ENCODE measurements at regions of chr7 and their contacts with region 1.

Region 1: DNA sequence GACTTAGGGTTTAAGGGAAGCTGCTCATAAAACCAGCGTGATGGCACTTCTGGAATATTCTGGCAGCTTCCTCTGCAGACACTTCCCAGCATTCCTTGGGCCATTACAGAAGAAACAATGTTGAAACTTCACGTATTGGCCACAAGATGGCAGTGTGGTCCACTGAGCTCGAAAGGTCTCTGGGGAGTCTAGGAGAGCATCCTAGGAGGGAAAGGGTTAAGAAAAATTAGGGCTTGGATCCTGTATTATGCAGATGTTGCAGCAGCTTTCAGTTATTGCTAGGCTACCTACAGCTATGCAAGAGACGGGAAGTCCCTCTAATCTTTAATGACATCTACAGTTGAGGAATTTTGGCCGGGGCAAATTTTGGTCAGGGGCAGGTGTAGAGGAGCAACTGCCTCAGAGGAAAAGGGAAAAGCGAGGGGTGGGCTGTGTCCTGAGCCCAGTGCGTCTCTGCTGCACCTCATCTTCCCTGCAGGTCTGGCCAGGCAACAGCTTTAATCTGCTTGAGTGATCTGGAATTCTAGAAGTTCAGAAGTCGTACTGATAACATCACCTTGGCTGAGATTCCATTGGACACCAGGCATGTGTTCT is 220.7 kb upstream of the PRSS58 start:
- DNase-seq: peak; percentile 52
- H3K4me3 ChIP-seq: no peak overlapping the region
- H3K27ac ChIP-seq: no peak overlapping the region
- H3K4me1 ChIP-seq: peaks cover 7 to 13% of the 10 kb centered on the region in 2 experiments; a peak in 2 of 4 replicates
- H3K27me3 ChIP-seq: no peaks in the 10 kb centered on the region
- CTCF ChIP-seq: peak; percentile 89
- EP300 ChIP-seq: peak in 1 of 2 experiments; percentile 56; a peak in 2 of 4 replicates
- RAD21 ChIP-seq: peak; percentile 71

Region 2: GRCh38 chr7:142134909-142135308 is 343.7 kb before region 1 on chr7:
- CTCF ChIA-PET with region 1: no interaction called
- POLR2A ChIA-PET with region 1: no interaction called
- DNase-seq: no peak
- H3K4me3 ChIP-seq: no peak overlapping the region
- H3K27ac ChIP-seq: no peak overlapping the region
- H3K4me1 ChIP-seq: no peaks in the 10 kb centered on the region
- H3K27me3 ChIP-seq: no peaks in the 10 kb centered on the region; the same call in 1 of the 2 replicates
- CTCF ChIP-seq: no peak
- EP300 ChIP-seq: no peak
- RAD21 ChIP-seq: no peak

Region 3: DNA sequence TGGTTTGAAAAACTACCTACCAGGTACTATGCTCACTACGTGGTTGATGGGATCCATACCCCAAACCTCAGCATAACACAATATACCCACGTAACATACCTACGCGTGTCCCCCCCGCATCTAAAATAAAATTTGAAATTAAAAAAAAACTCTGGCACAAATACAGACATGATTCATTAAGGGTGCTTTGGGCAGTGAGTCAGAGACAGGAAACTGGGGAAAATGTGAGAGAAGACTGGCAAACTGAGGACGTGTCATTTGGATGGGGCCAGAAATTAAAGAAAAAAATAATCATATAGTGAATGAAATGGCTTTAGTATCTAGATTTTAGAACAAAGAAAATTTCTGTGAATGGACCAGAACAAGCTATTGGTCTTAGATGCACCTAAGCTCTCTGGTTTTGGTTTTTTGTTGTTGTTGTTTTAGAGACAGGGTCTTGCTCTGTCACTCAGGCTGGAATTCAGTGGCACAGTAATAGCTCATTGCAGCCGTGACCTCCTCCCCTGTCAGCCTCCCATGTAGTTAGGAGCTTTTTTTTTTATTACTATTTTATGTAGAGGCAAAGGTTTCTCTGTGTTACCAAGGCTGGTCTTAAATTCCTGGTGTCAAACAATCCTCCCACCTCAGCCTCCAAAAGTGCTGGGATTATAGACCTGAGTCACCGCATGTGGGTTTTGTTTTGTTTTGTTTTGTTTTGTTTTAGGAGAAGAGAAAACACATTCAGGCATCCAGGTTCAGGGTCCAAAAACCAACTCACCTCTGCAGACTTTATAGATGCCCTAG is 214.8 kb before region 1 on chr7:
- CTCF ChIA-PET with region 1: no interaction called
- POLR2A ChIA-PET with region 1: no interaction called
- DNase-seq: no peak
- H3K4me3 ChIP-seq: no peak overlapping the region
- H3K27ac ChIP-seq: peak overlapping the region in 1 of 2 experiments; percentile 24; a peak in 1 of 4 replicates
- H3K4me1 ChIP-seq: peaks cover 0 to 3% of the 10 kb centered on the region in 2 experiments; a peak in 1 of 4 replicates
- H3K27me3 ChIP-seq: no peaks in the 10 kb centered on the region; the same call in 1 of the 2 replicates
- CTCF ChIP-seq: no peak
- EP300 ChIP-seq: no peak
- RAD21 ChIP-seq: no peak

Region 4: GRCh38 chr7:142357953-142358520 is 120.5 kb before region 1 on chr7:
- CTCF ChIA-PET with region 1: interaction called, 14 read pairs
- POLR2A ChIA-PET with region 1: no interaction called
- DNase-seq: peak; percentile 66
- H3K4me3 ChIP-seq: no peak overlapping the region
- H3K27ac ChIP-seq: no peak overlapping the region
- H3K4me1 ChIP-seq: no peaks in the 10 kb centered on the region; a peak in 1 of 4 replicates
- H3K27me3 ChIP-seq: peaks cover 17% of the 10 kb centered on the region; the same call in 1 of the 2 replicates
- CTCF ChIP-seq: peak; percentile 93
- EP300 ChIP-seq: no peak
- RAD21 ChIP-seq: peak; percentile 64

Region 5: DNA sequence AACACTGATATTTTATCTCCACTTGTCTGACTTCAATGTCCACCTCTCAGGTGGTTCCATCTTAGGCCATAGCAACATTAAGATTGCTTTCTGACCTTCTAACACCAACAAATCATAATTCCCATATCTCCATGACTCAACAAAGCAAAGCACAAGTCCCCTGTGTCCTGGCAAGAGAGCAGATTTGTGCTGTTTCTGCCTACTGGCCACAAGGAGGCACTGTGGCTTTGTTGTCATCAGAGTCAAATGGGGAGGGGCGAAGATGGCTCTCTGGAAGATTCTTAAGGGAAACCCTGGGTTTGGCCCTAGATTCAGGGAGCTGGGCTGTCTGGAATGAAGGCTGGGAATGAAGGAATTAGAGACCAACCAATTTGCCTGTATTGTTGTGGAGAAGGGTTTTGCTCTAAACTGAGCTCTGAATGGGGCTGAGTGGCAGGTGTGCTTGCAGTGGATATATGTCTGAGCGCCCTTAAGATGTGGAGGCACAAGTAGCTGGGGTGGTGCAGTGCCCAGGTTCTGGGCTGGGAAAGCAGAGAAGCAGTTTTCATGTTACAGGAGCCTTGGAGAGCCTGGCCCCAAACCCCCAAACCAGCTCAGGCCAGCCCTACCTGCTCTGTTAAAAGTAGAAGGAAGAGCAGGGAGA is 65.9 kb before region 1 on chr7:
- CTCF ChIA-PET with region 1: interaction called, 13 read pairs
- POLR2A ChIA-PET with region 1: no interaction called
- DNase-seq: peak; percentile 54
- H3K4me3 ChIP-seq: no peak overlapping the region
- H3K27ac ChIP-seq: no peak overlapping the region
- H3K4me1 ChIP-seq: no peaks in the 10 kb centered on the region
- H3K27me3 ChIP-seq: no peaks in the 10 kb centered on the region
- CTCF ChIP-seq: peak; percentile 94
- EP300 ChIP-seq: no peak
- RAD21 ChIP-seq: peak; percentile 64

Region 6: DNA sequence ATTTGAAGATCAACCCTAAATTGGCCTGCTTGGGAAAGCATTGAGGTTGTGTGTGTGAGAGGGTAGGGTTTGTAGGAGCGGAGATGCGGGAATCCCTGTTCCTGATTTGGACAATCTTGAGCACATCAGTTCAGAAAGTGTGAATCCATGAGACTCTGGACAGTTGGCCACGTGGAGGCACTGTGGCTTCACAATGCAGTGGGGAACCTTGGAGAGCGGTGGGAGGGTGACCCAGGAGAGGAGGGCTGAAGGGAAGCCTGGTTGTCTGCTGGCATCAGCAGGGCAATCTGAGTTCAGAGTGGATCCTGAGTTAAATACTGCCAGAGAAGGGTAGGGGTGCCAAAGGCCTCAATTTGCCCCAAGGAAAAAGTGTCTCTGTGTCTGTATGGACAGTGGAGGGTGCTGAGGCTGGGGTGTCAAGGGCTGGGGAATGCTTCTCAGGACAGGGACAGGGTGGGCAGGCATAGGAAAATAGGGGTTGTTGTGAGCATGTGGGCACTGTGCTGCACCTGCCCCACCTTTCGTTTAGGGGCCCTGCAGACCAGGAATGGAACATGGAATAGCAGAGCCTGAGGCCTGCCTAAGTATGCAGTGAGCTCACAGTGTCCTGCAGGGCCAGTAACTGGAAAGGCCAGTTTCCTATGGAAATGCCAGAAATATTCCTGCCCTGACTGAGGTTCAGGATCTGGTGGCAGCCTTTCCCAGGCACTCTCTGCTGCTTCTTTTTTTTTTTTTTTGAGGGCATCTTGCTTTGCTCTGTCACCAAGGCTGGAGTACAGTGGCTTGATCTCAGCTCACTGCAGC is 57.8 kb before region 1 on chr7:
- CTCF ChIA-PET with region 1: interaction called, 13 read pairs
- POLR2A ChIA-PET with region 1: no interaction called
- DNase-seq: peak; percentile 38
- H3K4me3 ChIP-seq: no peak overlapping the region
- H3K27ac ChIP-seq: no peak overlapping the region
- H3K4me1 ChIP-seq: peaks cover 0 to 3% of the 10 kb centered on the region in 2 experiments; a peak in 1 of 4 replicates
- H3K27me3 ChIP-seq: no peaks in the 10 kb centered on the region
- CTCF ChIP-seq: peak; percentile 72
- EP300 ChIP-seq: no peak
- RAD21 ChIP-seq: peak; percentile 70

Region 7: DNA sequence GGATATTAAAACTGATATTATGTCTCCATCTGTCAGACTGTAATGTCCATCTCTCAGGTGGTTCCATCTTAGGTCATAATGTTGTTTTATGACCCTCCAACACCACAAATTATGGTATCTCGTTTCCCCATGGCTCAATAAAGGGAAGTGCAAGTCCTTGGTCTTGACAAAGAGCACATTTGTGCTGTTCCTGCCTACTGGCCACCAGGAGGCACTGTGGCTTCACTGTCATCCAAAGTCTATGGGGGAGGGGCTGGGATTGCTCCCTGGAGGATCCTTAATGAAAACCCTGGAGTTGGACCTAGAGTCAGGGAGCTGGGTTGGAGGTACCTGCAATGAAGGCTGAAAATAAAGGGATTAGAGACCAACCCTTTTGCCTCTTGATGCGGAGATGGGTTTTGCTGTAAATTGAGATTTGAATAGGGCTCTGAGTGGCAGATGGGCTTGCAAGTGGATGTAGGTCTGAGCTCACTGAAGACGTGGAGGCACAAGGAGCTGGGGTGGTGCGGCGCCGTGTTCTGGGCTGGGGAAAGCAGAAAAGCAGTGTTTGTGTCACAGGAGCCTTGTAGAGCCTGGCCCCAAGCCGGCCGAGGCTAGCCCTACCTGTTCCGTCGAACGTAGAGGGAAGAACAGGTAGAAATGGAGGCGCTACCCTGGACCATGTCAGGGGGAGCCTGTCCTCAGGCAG is 40.2 kb before region 1 on chr7:
- CTCF ChIA-PET with region 1: interaction called, 13 read pairs
- POLR2A ChIA-PET with region 1: no interaction called
- DNase-seq: peak; percentile 61
- H3K4me3 ChIP-seq: no peak overlapping the region; a peak in 1 of 4 replicates
- H3K27ac ChIP-seq: no peak overlapping the region
- H3K4me1 ChIP-seq: peaks cover 14 to 16% of the 10 kb centered on the region in 2 experiments
- H3K27me3 ChIP-seq: no peaks in the 10 kb centered on the region
- CTCF ChIP-seq: peak; percentile 89
- EP300 ChIP-seq: no peak
- RAD21 ChIP-seq: peak; percentile 75

Region 8: DNA sequence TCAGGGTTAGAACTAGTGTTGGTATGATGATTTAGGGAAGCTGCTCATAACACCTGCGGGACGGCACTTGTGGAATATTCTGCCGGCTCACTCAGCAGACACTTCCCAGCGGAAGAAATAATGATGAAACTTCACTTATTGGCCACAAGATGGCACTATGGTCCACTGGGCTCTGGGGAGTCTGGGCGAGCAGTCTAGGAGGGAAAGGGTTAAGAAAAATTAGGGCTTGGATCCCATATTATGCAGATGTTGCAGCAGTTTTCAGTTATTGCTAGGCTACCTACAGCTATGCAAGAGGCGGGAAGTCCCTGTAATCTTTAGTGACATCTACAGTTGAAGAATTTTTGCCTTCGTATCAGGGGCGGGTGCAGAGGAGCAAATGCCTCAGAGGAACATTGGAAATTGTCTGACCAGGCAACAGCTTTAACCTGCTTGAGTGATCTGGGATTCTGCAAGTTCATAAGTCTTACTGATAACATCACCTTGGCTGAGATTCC is 18.0 kb after region 1 on chr7:
- CTCF ChIA-PET with region 1: interaction called, 174 read pairs
- POLR2A ChIA-PET with region 1: no interaction called
- DNase-seq: peak; percentile 67
- H3K4me3 ChIP-seq: no peak overlapping the region
- H3K27ac ChIP-seq: no peak overlapping the region
- H3K4me1 ChIP-seq: peaks cover 0 to 3% of the 10 kb centered on the region in 2 experiments; a peak in 1 of 4 replicates
- H3K27me3 ChIP-seq: peaks cover 21% of the 10 kb centered on the region; the same call in 1 of the 2 replicates
- CTCF ChIP-seq: peak; percentile 95
- EP300 ChIP-seq: no peak
- RAD21 ChIP-seq: peak; percentile 69

Region 9: GRCh38 chr7:142508258-142508689 is 29.7 kb after region 1 on chr7:
- CTCF ChIA-PET with region 1: interaction called, 174 read pairs
- POLR2A ChIA-PET with region 1: no interaction called
- DNase-seq: no peak
- H3K4me3 ChIP-seq: no peak overlapping the region
- H3K27ac ChIP-seq: no peak overlapping the region
- H3K4me1 ChIP-seq: no peaks in the 10 kb centered on the region
- H3K27me3 ChIP-seq: peaks cover 62% of the 10 kb centered on the region
- CTCF ChIP-seq: no peak
- EP300 ChIP-seq: no peak
- RAD21 ChIP-seq: no peak

Region 10: DNA sequence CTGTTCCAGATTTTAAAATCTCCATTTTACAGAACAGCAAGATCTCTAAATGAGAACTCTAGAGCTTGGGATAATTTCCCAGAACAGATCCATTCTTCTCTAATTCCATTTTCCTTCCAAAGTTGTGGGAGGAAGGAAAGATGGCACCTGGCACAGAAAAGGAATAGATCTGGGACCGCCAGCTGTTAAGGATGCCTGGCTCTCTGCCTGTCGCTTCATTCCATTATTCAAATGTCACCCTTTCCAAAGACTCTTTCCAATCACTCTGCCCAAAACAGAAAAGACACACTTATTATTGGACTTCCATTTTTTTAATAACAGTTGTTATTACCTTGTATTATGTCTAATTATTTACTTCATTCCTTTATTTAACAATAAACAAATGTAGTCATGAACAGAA is 549.1 kb after region 1 on chr7:
- CTCF ChIA-PET with region 1: no interaction called
- POLR2A ChIA-PET with region 1: no interaction called
- DNase-seq: no peak
- H3K4me3 ChIP-seq: no peak overlapping the region
- H3K27ac ChIP-seq: no peak overlapping the region
- H3K4me1 ChIP-seq: no peaks in the 10 kb centered on the region
- H3K27me3 ChIP-seq: peaks cover 11% of the 10 kb centered on the region
- CTCF ChIP-seq: no peak
- EP300 ChIP-seq: no peak
- RAD21 ChIP-seq: no peak

Measured in SK-N-SH (cell line).